Endothelial cell of umbilical vein (primary cell): ENCODE measurements at regions of chr2 and their contacts with region 1.

Region 1: GRCh38 chr2:206379886-206380285 is 63.4 kb upstream of the ADAM23 start:
- DNase-seq: no peak
- H3K4me3 ChIP-seq: no peak overlapping the region
- H3K27ac ChIP-seq: no peak overlapping the region
- H3K4me1 ChIP-seq: no peaks in the 10 kb centered on the region
- H3K27me3 ChIP-seq: peaks cover 0 to 6% of the 10 kb centered on the region in 2 experiments
- CTCF ChIP-seq: no peak
- POLR2A ChIP-seq: no peak

Region 2: DNA sequence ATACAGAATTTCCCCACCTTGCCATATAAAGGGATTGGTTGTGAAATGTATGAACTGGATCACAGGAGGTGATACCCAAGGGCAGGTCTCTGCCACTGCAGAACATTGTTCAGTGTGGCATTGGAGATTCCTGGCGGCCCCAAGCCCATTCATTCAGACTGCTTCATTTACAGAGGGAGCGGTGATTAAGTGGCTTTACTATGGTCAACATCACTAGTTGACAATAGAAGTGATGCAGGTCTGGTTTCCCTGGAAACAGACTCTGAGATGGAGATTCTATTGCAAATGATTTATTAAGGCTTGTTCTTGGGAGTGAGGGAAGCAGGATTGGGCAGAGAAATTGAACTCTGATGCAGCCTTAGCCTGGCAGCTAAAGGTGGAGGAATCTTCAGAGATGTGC is 43.0 kb before region 1 on chr2:
- CTCF ChIA-PET with region 1: no interaction called
- POLR2A ChIA-PET with region 1: no interaction called
- dilution Hi-C with region 1: no loop called
- intact Hi-C with region 1: loop called (anchors 1 kb)
- DNase-seq: no peak
- H3K4me3 ChIP-seq: no peak overlapping the region
- H3K27ac ChIP-seq: no peak overlapping the region
- H3K4me1 ChIP-seq: no peaks in the 10 kb centered on the region
- H3K27me3 ChIP-seq: peaks cover 3 to 7% of the 10 kb centered on the region in 2 experiments
- CTCF ChIP-seq: no peak
- POLR2A ChIP-seq: no peak